Left cardiac atrium (tissue), 4 donors: ENCODE measurements at regions of chr11 and their contacts with region 1.

Region 1: GRCh38 chr11:112837162-112837826 is 123.9 kb upstream of the NCAM1 start:
- DNase-seq: no peak
- ATAC-seq: peak; percentile 48 to 64

Region 2: GRCh38 chr11:113113801-113114706 is 276.8 kb after region 1 on chr11:
- intact Hi-C with region 1: loop called in 1 of 2 experiments (anchors 10 kb)
- DNase-seq: peak; percentile 62
- ATAC-seq: peak; percentile 88 to 94